GM12878 (cell line): ENCODE measurements at regions of chr3 and their contacts with region 1.

Region 1: GRCh38 chr3:122055215-122055614 is at the start of gene CD86:
- DNase-seq: peak; percentile 77
- ATAC-seq: peak; percentile 92
- H3K4me3 ChIP-seq: peak within 1 kb of the TSS; percentile 61
- H3K27ac ChIP-seq: peak within 1 kb of the TSS; percentile 45
- H3K4me1 ChIP-seq: peaks cover 13% of the 10 kb centered on the region
- H3K27me3 ChIP-seq: no peaks in the 10 kb centered on the region
- CTCF ChIP-seq: no peak
- EP300 ChIP-seq: peak in 1 of 2 experiments; percentile 68; a peak in 1 of 4 replicates
- POLR2A ChIP-seq: peak; percentile 79
- RAD21 ChIP-seq: peak; percentile 14; the same call in 1 of the 2 replicates
- polyA plus RNA-seq, gene CD86: 68.0 to 79.5 TPM

Region 2: DNA sequence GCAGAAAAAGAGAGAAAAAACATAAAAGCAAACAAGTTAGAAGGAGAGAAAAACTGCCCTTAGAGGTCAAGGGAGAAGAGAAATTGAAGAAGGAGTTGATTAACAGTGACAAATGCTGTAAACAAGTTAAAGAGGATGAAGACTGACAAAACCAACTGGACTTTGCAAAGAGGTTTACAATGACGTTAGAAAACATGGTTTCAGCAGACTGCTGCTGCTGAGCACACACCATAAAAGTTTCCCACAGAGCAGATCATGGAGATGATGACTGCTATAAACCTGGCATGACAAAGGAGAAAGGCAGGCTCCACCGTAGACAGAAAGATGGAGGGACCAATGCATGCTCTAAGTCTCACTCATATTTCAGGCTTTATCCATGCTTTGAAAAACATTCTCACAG is 588.1 kb before region 1 on chr3:
- CTCF ChIA-PET with region 1: no interaction called
- POLR2A ChIA-PET with region 1: no interaction called
- RAD21 ChIA-PET with region 1: no interaction called
- SMC1A ChIA-PET with region 1: no interaction called
- in situ Hi-C with region 1: no loop called
- intact Hi-C with region 1: no loop called
- DNase-seq: no peak
- ATAC-seq: no peak
- H3K4me3 ChIP-seq: no peak overlapping the region
- H3K27ac ChIP-seq: no peak overlapping the region
- H3K4me1 ChIP-seq: no peaks in the 10 kb centered on the region
- H3K27me3 ChIP-seq: no peaks in the 10 kb centered on the region
- CTCF ChIP-seq: no peak
- EP300 ChIP-seq: no peak
- POLR2A ChIP-seq: no peak
- RAD21 ChIP-seq: no peak

Region 3: GRCh38 chr3:122004991-122005565 is 50.1 kb before region 1 on chr3:
- CTCF ChIA-PET with region 1: interaction called, 4 read pairs
- POLR2A ChIA-PET with region 1: interaction called, 3 read pairs
- RAD21 ChIA-PET with region 1: interaction called, 19 read pairs
- SMC1A ChIA-PET with region 1: interaction called, 46 read pairs
- in situ Hi-C with region 1: no loop called
- intact Hi-C with region 1: loop called (anchors 5 kb)
- DNase-seq: peak; percentile 74
- ATAC-seq: peak; percentile 78
- H3K4me3 ChIP-seq: peak overlapping the region; percentile 46; the same call in 1 of the 2 replicates
- H3K27ac ChIP-seq: peak overlapping the region; percentile 91
- H3K4me1 ChIP-seq: peaks cover 58% of the 10 kb centered on the region
- H3K27me3 ChIP-seq: no peaks in the 10 kb centered on the region
- CTCF ChIP-seq: 0 out of 6 replicates have a peak, but pooled peaks of 1 of the 3 experiments have one; percentile 3
- EP300 ChIP-seq: peak; percentile 11 to 65; a peak in 3 of 4 replicates
- POLR2A ChIP-seq: 0 out of 2 replicates have a peak, but pooled peaks have one; percentile 35
- RAD21 ChIP-seq: no peak

Region 4: DNA sequence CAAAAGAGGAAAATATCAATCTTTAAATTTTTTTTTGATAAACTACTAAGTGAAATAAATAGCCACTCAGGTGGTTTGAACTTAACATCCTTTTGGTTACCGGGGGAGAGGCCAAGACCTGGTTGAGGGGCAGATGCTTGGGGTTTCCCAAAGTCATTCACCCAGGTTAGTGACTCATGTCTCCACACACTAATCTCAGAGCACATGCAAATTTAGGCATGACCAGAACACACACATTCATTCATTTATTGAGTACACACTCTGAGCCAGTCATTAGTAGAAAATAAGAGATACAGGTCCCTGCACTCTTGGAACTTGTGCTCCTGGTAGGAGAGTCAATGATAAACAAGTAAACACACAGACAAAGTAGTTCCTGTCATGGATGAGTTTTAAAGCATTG is 40.5 kb before region 1 on chr3:
- CTCF ChIA-PET with region 1: interaction called, 9 read pairs
- POLR2A ChIA-PET with region 1: interaction called, 16 read pairs
- RAD21 ChIA-PET with region 1: interaction called, 21 read pairs
- SMC1A ChIA-PET with region 1: interaction called, 46 read pairs
- in situ Hi-C with region 1: no loop called
- intact Hi-C with region 1: loop called (anchors 5 kb)
- DNase-seq: peak; percentile 91
- ATAC-seq: peak; percentile 80
- H3K4me3 ChIP-seq: peak overlapping the region; percentile 18; the same call in 1 of the 2 replicates
- H3K27ac ChIP-seq: peak overlapping the region; percentile 60
- H3K4me1 ChIP-seq: peaks cover 72% of the 10 kb centered on the region
- H3K27me3 ChIP-seq: no peaks in the 10 kb centered on the region
- CTCF ChIP-seq: no peak
- EP300 ChIP-seq: peak; percentile 81 to 86; a peak in 3 of 4 replicates
- POLR2A ChIP-seq: no peak
- RAD21 ChIP-seq: no peak

Region 5: DNA sequence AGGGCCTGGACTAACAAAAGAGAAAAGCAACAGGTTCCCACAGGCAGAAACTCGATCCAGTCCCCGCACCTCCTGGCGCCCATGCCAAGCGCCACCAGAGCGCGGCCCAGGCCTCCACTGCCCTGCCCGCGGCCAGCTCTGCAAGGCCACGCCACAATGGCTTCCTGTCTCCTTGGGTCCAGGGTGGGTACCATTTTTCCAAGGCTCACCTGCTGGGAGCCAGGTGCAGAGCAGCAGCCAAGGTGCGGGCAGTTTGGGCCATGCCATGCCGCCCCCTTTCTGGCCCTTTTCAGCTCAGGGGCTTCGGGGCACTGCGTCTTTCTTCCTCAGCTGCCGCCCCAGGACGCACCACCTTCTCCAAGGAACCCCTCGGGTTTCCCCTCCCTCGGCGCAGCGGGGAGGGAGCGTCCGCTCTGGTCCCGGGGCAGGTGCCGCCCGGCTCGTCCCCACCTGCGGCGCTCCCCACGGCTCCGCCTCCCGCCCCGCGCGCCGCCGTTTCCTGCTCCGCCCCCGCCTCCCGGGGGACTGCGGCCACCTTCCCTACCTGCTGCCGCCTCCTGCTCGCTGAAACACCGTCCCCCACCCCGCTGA is 33.3 kb before region 1 on chr3 and contains the start of gene ILDR1:
- CTCF ChIA-PET with region 1: interaction called, 13 read pairs
- POLR2A ChIA-PET with region 1: interaction called, 17 read pairs
- RAD21 ChIA-PET with region 1: interaction called, 21 read pairs
- SMC1A ChIA-PET with region 1: interaction called, 29 read pairs
- in situ Hi-C with region 1: no loop called
- intact Hi-C with region 1: loop called (anchors 2 kb)
- DNase-seq: no peak
- ATAC-seq: peak; percentile 55
- H3K4me3 ChIP-seq: peak within 1 kb of the TSS; percentile 72
- H3K27ac ChIP-seq: peak within 1 kb of the TSS; percentile 65
- H3K4me1 ChIP-seq: peaks cover 49% of the 10 kb centered on the region
- H3K27me3 ChIP-seq: no peaks in the 10 kb centered on the region
- CTCF ChIP-seq: no peak
- EP300 ChIP-seq: no peak
- POLR2A ChIP-seq: peak; percentile 60; the same call in 1 of the 2 replicates
- RAD21 ChIP-seq: no peak
- polyA plus RNA-seq, gene ILDR1: 1.3 to 1.8 TPM

Region 6: GRCh38 chr3:122030381-122031122 is 24.7 kb before region 1 on chr3:
- CTCF ChIA-PET with region 1: interaction called, 13 read pairs
- POLR2A ChIA-PET with region 1: interaction called, 17 read pairs
- RAD21 ChIA-PET with region 1: interaction called, 18 read pairs
- SMC1A ChIA-PET with region 1: interaction called, 26 read pairs
- in situ Hi-C with region 1: no loop called
- intact Hi-C with region 1: loop called (anchors 2 kb)
- DNase-seq: peak; percentile 74
- ATAC-seq: peak; percentile 86
- H3K4me3 ChIP-seq: peak overlapping the region; percentile 41; the same call in 1 of the 2 replicates
- H3K27ac ChIP-seq: peak overlapping the region; percentile 89
- H3K4me1 ChIP-seq: peaks cover 37% of the 10 kb centered on the region
- H3K27me3 ChIP-seq: no peaks in the 10 kb centered on the region
- CTCF ChIP-seq: no peak
- EP300 ChIP-seq: no peak
- POLR2A ChIP-seq: 0 out of 2 replicates have a peak, but pooled peaks have one; percentile 25
- RAD21 ChIP-seq: peak; percentile 11; the same call in 1 of the 2 replicates

Region 7: DNA sequence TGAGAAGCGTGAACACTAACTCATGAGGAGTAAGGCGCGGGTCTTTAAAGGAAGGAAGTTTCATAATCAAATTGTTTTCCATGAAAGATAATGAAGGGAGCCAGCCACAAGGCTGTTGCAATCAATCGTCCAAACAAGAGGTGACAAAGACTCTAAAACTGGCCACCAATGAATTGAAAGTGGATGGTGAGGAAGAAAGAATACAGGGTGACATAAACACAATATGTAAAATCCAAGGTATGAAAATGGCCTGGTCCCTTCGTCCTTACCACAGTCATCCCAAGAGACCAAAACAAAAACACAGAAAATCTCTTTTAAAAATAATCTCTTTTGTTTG is 12.0 kb after region 1 on chr3:
- CTCF ChIA-PET with region 1: interaction called, 11 read pairs
- POLR2A ChIA-PET with region 1: interaction called, 33 read pairs
- RAD21 ChIA-PET with region 1: interaction called, 21 read pairs
- SMC1A ChIA-PET with region 1: interaction called, 74 read pairs
- in situ Hi-C with region 1: no loop called
- intact Hi-C with region 1: no loop called
- DNase-seq: no peak
- ATAC-seq: peak; percentile 66
- H3K4me3 ChIP-seq: peak overlapping the region; percentile 52; the same call in 1 of the 2 replicates
- H3K27ac ChIP-seq: peak overlapping the region; percentile 66
- H3K4me1 ChIP-seq: peaks cover 57% of the 10 kb centered on the region
- H3K27me3 ChIP-seq: no peaks in the 10 kb centered on the region
- CTCF ChIP-seq: no peak
- EP300 ChIP-seq: 0 out of 4 replicates have a peak, but pooled peaks have one; percentile 20 to 29
- POLR2A ChIP-seq: no peak
- RAD21 ChIP-seq: no peak

Region 8: GRCh38 chr3:122074621-122075265 is 19.5 kb after region 1 on chr3:
- CTCF ChIA-PET with region 1: interaction called, 4 read pairs
- POLR2A ChIA-PET with region 1: interaction called, 8 read pairs
- RAD21 ChIA-PET with region 1: interaction called, 10 read pairs
- SMC1A ChIA-PET with region 1: interaction called, 394 read pairs
- in situ Hi-C with region 1: no loop called
- intact Hi-C with region 1: no loop called
- DNase-seq: peak; percentile 92
- ATAC-seq: peak; percentile 70
- H3K4me3 ChIP-seq: peak overlapping the region; percentile 72
- H3K27ac ChIP-seq: peak overlapping the region; percentile 97
- H3K4me1 ChIP-seq: peaks cover 45% of the 10 kb centered on the region
- H3K27me3 ChIP-seq: no peaks in the 10 kb centered on the region
- CTCF ChIP-seq: no peak
- EP300 ChIP-seq: peak; percentile 65 to 76
- POLR2A ChIP-seq: peak; percentile 73
- RAD21 ChIP-seq: no peak